H1 (cell line): ENCODE measurements at regions of chr17 and their contacts with region 1.

Region 1: DNA sequence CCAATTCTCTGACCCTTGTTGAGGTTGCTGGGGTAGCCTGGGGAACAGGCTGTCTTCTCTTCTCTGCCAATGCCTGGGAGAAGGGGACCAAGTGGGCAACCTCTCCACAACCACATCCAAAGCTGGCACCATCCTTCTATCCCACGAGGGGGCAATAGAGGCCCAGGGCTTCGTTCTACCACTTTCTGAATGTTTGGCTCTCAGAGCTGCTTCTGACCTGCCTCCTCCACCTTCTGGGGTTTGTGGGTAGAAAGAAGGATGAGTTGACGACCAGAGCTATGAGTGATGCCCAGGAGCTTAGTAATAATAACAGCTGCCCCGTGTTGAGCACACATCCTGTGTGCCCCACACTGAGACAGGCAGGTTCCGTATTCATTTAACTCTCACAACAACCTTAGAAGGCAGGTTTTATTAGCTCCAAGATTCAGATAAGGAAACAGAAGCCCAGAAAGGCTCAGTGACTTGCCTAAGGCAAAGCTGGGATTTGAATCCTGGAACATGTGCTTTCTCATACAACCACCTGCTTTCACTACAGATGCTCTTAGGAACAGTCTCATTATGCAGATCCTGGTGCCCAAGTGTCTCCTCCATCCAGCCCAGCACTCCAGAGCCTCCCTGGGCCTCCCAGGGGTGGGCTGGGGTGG is 11.1 kb downstream of the TSPOAP1 start:
- DNase-seq: peak in 1 of 2 experiments; percentile 62
- H3K4me3 ChIP-seq: no peak overlapping the region
- H3K27ac ChIP-seq: no peak overlapping the region
- H3K4me1 ChIP-seq: no peaks in the 10 kb centered on the region; a peak in 1 of 7 replicates
- H3K27me3 ChIP-seq: no peaks in the 10 kb centered on the region; a peak in 2 of 7 replicates
- CTCF ChIP-seq: peak; percentile 71 to 87 (median 83)
- EP300 ChIP-seq: no peak
- POLR2A ChIP-seq: no peak
- RAD21 ChIP-seq: peak; percentile 94

Region 2: DNA sequence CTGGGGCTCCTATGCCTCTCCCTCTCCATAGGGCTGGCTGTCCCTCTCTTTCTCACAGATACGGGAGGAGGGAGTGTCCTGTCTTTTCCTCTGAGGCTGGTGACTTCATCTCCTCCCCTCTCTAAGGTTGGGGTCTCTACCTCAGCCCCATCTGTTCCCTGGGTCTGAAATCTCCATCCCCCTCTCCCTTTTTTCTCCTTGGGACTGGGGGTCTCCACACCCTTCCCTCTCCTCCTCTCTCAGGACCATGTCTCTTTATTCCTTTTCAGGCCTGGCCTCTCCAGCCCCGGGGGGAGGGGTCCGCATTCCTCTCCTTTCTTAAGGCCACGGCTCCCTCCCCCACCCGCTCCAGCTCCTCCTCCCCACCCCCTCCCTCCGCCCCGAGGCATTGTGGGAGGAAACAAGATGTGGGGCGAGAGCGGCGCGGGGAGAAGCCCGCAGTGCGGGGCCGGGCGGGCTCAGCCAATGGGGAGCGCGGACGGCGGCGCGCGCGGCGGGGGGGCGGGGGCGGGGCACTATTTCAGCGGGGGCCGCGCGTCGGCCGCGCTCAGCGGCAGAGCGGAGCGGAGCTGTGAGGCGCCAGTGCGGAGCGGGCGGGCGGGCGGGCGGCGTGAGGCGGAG is 234.6 kb before region 1 on chr17 and contains the start of gene DYNLL2:
- CTCF ChIA-PET with region 1: no interaction called
- POLR2A ChIA-PET with region 1: no interaction called
- DNase-seq: peak; percentile 84 to 89
- H3K4me3 ChIP-seq: peak within 1 kb of the TSS; percentile 78 to 91 (median 84)
- H3K27ac ChIP-seq: peak within 1 kb of the TSS; percentile 94
- H3K4me1 ChIP-seq: peaks cover 11 to 24% (median 18%) of the 10 kb centered on the region in 4 experiments
- H3K27me3 ChIP-seq: no peaks in the 10 kb centered on the region; a peak in 3 of 7 replicates
- CTCF ChIP-seq: no peak
- EP300 ChIP-seq: peak in 1 of 2 experiments; percentile 46; a peak in 1 of 3 replicates
- POLR2A ChIP-seq: peak; percentile 72 to 80
- RAD21 ChIP-seq: no peak
- total RNA-seq, gene DYNLL2: 49.7 and 52.7 TPM in 2 replicates

Region 3: DNA sequence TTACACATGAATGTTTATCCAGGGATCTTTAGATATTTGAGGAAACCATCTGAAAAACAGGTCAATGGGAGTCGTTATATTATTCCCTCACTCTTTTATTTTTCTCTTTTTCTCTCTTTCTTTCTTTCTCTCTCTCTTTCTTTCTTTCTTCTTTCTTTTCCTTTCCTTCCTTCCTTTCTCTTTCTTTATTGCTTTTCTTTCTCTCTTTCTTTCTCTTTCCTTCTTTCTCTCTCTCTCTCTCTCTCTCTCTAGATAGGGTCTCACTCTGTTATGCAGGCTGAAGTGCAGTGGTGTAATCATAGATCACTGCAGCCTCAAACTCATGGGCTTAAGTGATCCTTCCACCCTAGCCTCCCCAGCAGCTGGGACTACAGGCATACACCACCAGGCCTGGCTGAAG is 189.7 kb before region 1 on chr17:
- CTCF ChIA-PET with region 1: no interaction called
- POLR2A ChIA-PET with region 1: no interaction called
- DNase-seq: no peak
- H3K4me3 ChIP-seq: no peak overlapping the region
- H3K27ac ChIP-seq: no peak overlapping the region
- H3K4me1 ChIP-seq: no peaks in the 10 kb centered on the region
- H3K27me3 ChIP-seq: no peaks in the 10 kb centered on the region; a peak in 1 of 7 replicates
- CTCF ChIP-seq: no peak
- EP300 ChIP-seq: no peak
- POLR2A ChIP-seq: no peak
- RAD21 ChIP-seq: no peak

Region 4: GRCh38 chr17:58277107-58277801 is 40.3 kb before region 1 on chr17:
- CTCF ChIA-PET with region 1: interaction called, 10 read pairs
- POLR2A ChIA-PET with region 1: interaction called, 4 read pairs
- DNase-seq: no peak
- H3K4me3 ChIP-seq: no peak overlapping the region
- H3K27ac ChIP-seq: no peak overlapping the region
- H3K4me1 ChIP-seq: peaks cover 0 to 3% (median 0%) of the 10 kb centered on the region in 4 experiments; a peak in 1 of 7 replicates
- H3K27me3 ChIP-seq: peaks cover 0 to 8% (median 0%) of the 10 kb centered on the region in 4 experiments; a peak in 3 of 7 replicates
- CTCF ChIP-seq: peak in 2 of 3 experiments; percentile 54 to 67; a peak in 3 of 4 replicates
- EP300 ChIP-seq: no peak
- POLR2A ChIP-seq: no peak
- RAD21 ChIP-seq: peak; percentile 65 to 73

Region 5: DNA sequence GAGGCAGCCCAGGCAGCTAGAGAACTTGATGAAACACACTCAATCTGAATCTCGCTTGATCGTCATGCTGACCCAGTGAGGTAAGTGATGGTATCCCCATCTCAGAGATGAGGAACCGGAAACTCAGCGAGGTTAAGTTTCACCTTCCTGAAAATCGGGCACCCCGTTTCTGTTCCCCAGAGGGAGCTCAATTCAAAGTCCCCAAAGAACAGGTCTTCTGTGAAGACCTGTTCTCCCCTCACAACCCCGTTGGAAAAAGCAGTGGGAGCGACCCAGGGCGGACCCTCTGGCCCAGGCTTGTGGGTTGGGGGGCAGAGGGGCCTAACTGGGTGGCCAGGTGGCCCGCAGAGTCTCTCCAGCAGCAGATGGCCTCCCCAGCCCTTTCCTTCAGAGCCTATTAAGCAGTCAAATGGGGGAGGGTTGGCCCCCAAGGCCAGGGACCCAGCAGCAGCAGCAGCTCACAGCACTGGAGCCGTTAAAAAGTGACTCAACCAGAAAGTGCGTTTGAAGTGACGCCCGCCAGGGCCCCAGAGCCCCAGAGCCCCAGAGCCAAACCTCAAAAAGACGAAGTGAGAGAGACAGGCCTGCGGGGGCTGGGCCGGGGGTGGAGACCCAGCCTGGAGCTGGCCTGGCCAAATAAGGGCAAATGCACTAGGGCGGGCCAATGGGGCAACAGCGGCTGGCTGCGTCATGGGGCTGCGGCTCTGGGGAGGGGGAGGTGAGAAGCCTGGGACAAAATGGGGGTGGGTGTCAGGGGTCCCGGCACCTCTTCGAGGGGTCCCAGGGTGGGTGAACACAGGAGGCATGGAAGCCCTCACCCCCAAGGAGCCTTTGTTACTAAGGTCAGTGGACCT is 20.3 kb after region 1 on chr17:
- CTCF ChIA-PET with region 1: interaction called, 384 read pairs
- POLR2A ChIA-PET with region 1: interaction called, 66 read pairs
- DNase-seq: peak; percentile 44 to 78
- H3K4me3 ChIP-seq: peak overlapping the region in 1 of 4 experiments; percentile 36; a peak in 1 of 8 replicates
- H3K27ac ChIP-seq: peak overlapping the region; percentile 70
- H3K4me1 ChIP-seq: peaks cover 4 to 26% (median 21%) of the 10 kb centered on the region in 4 experiments
- H3K27me3 ChIP-seq: peaks cover 0 to 2% (median 0%) of the 10 kb centered on the region in 4 experiments; a peak in 3 of 7 replicates
- CTCF ChIP-seq: no peak; a peak in 1 of 4 replicates
- EP300 ChIP-seq: peak in 1 of 2 experiments; percentile 55; a peak in 1 of 3 replicates
- POLR2A ChIP-seq: peak in 1 of 2 experiments; percentile 69; a peak in 1 of 3 replicates
- RAD21 ChIP-seq: no peak

Region 6: GRCh38 chr17:58364270-58364942 is 46.9 kb after region 1 on chr17:
- CTCF ChIA-PET with region 1: interaction called, 23 read pairs
- POLR2A ChIA-PET with region 1: no interaction called
- DNase-seq: no peak
- H3K4me3 ChIP-seq: no peak overlapping the region
- H3K27ac ChIP-seq: no peak overlapping the region
- H3K4me1 ChIP-seq: peaks cover 0 to 2% (median 0%) of the 10 kb centered on the region in 4 experiments; a peak in 1 of 7 replicates
- H3K27me3 ChIP-seq: no peaks in the 10 kb centered on the region
- CTCF ChIP-seq: no peak
- EP300 ChIP-seq: no peak
- POLR2A ChIP-seq: no peak
- RAD21 ChIP-seq: no peak

Region 7: GRCh38 chr17:58382108-58382871 is 64.7 kb after region 1 on chr17:
- CTCF ChIA-PET with region 1: no interaction called
- POLR2A ChIA-PET with region 1: no interaction called
- DNase-seq: peak in 1 of 2 experiments; percentile 28
- H3K4me3 ChIP-seq: no peak overlapping the region
- H3K27ac ChIP-seq: no peak overlapping the region
- H3K4me1 ChIP-seq: peaks cover 0 to 5% (median under 1%) of the 10 kb centered on the region in 4 experiments; a peak in 2 of 7 replicates
- H3K27me3 ChIP-seq: no peaks in the 10 kb centered on the region
- CTCF ChIP-seq: no peak
- EP300 ChIP-seq: no peak
- POLR2A ChIP-seq: no peak
- RAD21 ChIP-seq: no peak

Region 8: GRCh38 chr17:58447039-58447975 is 129.8 kb after region 1 on chr17:
- CTCF ChIA-PET with region 1: interaction called, 96 read pairs
- POLR2A ChIA-PET with region 1: interaction called, 5 read pairs
- DNase-seq: peak; percentile 70 to 83
- H3K4me3 ChIP-seq: no peak overlapping the region
- H3K27ac ChIP-seq: no peak overlapping the region
- H3K4me1 ChIP-seq: peaks cover 3 to 9% (median 4%) of the 10 kb centered on the region in 4 experiments; a peak in 6 of 7 replicates
- H3K27me3 ChIP-seq: no peaks in the 10 kb centered on the region
- CTCF ChIP-seq: peak; percentile 81 to 96 (median 96)
- EP300 ChIP-seq: 0 out of 3 replicates have a peak, but pooled peaks of 1 of the 2 experiments have one; percentile 5
- POLR2A ChIP-seq: no peak
- RAD21 ChIP-seq: peak; percentile 99

Region 9: GRCh38 chr17:58577642-58578091 is 260.1 kb after region 1 on chr17:
- CTCF ChIA-PET with region 1: no interaction called
- POLR2A ChIA-PET with region 1: no interaction called
- DNase-seq: peak in 1 of 2 experiments; percentile 67
- H3K4me3 ChIP-seq: no peak overlapping the region
- H3K27ac ChIP-seq: no peak overlapping the region
- H3K4me1 ChIP-seq: no peaks in the 10 kb centered on the region
- H3K27me3 ChIP-seq: no peaks in the 10 kb centered on the region
- CTCF ChIP-seq: peak in 2 of 3 experiments; percentile 63 to 69; a peak in 3 of 4 replicates
- EP300 ChIP-seq: no peak
- POLR2A ChIP-seq: no peak
- RAD21 ChIP-seq: peak; percentile 46 to 55; a peak in 3 of 4 replicates